MCF 10A (cell line): ENCODE measurements at regions of chr17 and their contacts with region 1.

Region 1: GRCh38 chr17:3636154-3636907 is at the starts of genes CTNS and SHPK:
- DNase-seq: peak; percentile 98
- H3K4me3 Mint-ChIP-seq: peak within 1 kb of the TSS; percentile 93
- H3K27ac Mint-ChIP-seq: peak within 1 kb of the TSS; percentile 100
- H3K4me1 Mint-ChIP-seq: peaks cover 17% of the 10 kb centered on the region
- H3K27me3 Mint-ChIP-seq: no peaks in the 10 kb centered on the region
- CTCF ChIP-seq: no peak
- total RNA-seq, gene CTNS: 7.1 and 11.4 TPM in 2 replicates
- total RNA-seq, gene SHPK: 6.3 and 8.3 TPM in 2 replicates

Region 2: DNA sequence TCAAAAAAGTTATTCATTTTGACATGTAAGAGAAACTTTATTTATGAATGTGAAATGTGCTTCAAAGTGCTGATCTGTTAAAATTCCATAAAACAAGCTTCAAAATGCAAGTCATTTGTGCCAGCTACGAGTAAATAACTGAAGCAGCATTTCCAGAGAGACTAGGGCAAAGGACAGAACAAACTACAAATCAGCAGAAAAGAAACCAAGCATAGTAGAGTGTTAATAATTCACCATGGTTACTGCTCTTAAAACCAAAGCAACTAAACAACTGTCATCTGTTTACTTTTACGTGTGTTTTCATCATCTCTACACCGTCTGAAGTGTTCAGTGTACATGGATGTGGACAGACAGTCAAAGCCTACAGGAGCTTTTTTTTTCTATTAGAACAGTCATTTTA is 162.1 kb before region 1 on chr17:
- CTCF ChIA-PET with region 1: interaction called, 3 read pairs
- POLR2A ChIA-PET with region 1: no interaction called
- intact Hi-C with region 1: loop called (anchors 2 kb)
- DNase-seq: no peak
- H3K4me3 Mint-ChIP-seq: no peak overlapping the region
- H3K27ac Mint-ChIP-seq: no peak overlapping the region
- H3K4me1 Mint-ChIP-seq: peaks cover 14% of the 10 kb centered on the region
- H3K27me3 Mint-ChIP-seq: peaks cover 3% of the 10 kb centered on the region
- CTCF ChIP-seq: no peak

Region 3: DNA sequence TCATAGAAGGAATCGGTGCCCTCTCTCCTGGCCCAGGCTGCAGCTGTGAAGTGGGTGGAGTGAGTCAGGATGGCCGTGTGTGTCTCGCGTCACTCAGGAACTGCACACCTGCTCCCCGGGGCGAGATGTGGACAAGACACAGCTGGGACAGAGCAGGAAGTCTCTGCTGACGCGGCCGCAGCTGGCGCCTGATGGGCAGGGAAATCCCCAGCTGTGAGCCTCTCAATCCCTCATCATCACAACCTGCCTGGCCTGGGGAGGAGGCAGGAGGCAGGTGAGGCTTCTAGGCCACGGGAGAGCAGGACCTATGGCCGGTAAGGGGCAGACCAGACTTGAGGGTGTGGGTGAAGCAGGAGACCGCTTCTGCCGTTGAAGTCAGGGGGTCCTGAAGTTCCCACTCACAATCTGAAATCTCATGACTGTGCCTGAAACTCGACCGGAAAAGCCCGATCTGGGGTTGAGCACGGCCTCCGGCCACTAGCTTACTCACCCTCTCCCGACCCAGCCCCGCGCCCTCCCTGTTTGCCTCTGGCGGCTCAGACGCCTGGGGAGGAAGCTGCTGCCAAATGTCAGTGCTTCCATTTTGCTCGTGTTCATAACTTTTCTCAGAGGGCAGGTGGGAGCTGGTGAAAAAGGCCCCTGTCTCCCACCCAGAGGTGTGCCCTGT is 77.6 kb before region 1 on chr17:
- CTCF ChIA-PET with region 1: no interaction called
- POLR2A ChIA-PET with region 1: interaction called, 9 read pairs
- intact Hi-C with region 1: loop called (anchors 5 kb)
- DNase-seq: peak; percentile 74
- H3K4me3 Mint-ChIP-seq: peak overlapping the region; percentile 7
- H3K27ac Mint-ChIP-seq: peak overlapping the region; percentile 92
- H3K4me1 Mint-ChIP-seq: peaks cover 24% of the 10 kb centered on the region
- H3K27me3 Mint-ChIP-seq: no peaks in the 10 kb centered on the region
- CTCF ChIP-seq: no peak

Region 4: DNA sequence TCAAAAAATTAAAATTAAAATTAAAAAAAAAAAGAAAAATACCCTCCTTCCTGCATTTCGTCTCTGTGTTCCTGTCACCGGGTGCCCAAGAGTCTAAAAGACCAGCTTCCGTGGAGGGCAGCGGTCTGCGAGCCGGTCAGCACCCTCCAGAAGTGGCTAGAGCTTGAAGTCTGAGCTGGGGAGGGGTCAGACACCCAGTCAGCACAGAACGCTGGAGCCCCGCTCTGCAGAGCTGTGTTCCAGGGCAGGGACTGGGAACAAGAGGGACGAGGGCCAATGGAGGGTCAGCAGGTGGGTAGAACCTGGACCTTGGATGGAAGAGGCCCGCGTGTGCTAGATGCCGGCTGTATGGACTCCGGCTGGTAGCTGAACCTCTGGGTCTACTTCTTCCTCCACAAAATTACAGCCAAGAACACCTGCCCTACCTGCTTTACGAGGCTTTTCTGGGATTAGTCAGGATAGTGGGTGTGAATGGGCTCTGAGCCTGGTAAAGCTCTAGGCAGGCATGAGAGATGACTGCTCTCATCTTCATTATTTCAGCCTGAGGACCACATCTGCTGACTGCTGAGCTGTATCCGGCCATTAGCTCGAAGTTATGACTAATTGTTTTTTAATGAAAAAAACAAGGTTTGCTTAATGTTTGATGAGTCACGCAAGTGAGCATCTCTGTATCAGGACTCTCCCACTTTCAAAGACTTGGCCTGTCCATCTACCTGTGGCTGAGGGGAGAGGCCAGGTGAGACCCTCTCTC is 33.0 kb before region 1 on chr17:
- CTCF ChIA-PET with region 1: no interaction called
- POLR2A ChIA-PET with region 1: interaction called, 3 read pairs
- intact Hi-C with region 1: loop called (anchors 1 kb)
- DNase-seq: peak; percentile 60
- H3K4me3 Mint-ChIP-seq: no peak overlapping the region
- H3K27ac Mint-ChIP-seq: no peak overlapping the region
- H3K4me1 Mint-ChIP-seq: peaks cover 11% of the 10 kb centered on the region
- H3K27me3 Mint-ChIP-seq: no peaks in the 10 kb centered on the region
- CTCF ChIP-seq: no peak